CD4-positive, alpha-beta T cell (primary cell): ENCODE measurements at regions of chr20 and their contacts with region 1.

Region 1: GRCh38 chr20:4864311-4864752 is 137.0 kb downstream of the SLC23A2 start:
- DNase-seq: no peak
- ATAC-seq: no peak
- H3K4me3 ChIP-seq: no peak overlapping the region
- H3K4me3 Mint-ChIP-seq: peak overlapping the region; percentile 20
- H3K27ac ChIP-seq: no peak overlapping the region
- H3K27ac Mint-ChIP-seq: no peak overlapping the region
- H3K4me1 ChIP-seq: no peaks in the 10 kb centered on the region
- H3K4me1 Mint-ChIP-seq: peaks cover 7% of the 10 kb centered on the region
- H3K27me3 ChIP-seq: no peaks in the 10 kb centered on the region
- H3K27me3 Mint-ChIP-seq: no peaks in the 10 kb centered on the region
- CTCF ChIP-seq: no peak

Region 2: DNA sequence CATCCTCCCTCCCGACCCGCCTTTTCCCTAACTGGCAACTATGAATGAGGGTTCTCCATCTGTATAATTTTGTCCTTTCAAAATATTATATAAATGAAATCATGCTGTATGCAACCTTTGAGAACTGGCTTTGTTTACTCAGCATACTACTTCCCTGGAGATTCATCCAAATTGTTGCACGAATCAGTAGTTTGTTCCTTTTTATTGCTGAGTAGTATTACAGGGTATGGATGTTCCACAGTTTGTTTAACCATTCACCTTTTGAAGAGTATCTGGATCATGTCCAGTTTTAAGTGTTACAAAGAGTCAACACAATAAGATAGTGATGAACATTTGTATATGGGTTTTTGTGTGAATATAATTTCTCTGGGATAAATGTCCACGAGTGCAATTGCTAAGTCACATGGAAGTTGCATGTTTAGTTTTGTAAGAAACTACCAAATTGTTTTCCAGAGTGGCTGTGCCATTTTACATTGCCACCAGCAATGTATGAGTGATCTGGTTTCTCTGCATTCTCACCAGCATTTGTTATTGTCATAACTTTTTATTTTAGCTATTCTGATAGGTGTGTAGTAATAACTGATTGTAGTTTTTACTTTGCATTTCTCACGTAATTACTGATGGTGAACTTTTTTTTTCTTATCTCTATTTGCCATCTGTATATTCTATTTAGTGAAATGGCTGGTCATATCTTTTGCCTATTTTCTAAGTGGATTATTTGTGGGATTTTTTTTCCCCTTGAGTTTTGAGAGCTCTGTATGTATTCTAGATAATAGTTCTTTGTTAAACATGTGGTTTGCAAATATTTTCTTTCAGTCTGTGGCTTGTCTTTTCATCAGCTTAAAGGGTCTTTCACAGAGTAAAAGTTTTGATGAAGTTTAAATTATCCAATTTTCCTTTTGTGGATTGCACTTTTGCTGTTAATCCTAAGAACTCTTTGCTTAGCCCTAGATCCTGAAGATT is 834.5 kb before region 1 on chr20:
- CTCF ChIA-PET with region 1: no interaction called
- POLR2A ChIA-PET with region 1: no interaction called
- intact Hi-C with region 1: loop called in 1 of 2 experiments (anchors 5 kb)
- DNase-seq: no peak
- ATAC-seq: no peak
- H3K4me3 ChIP-seq: no peak overlapping the region
- H3K4me3 Mint-ChIP-seq: no peak overlapping the region
- H3K27ac ChIP-seq: no peak overlapping the region
- H3K27ac Mint-ChIP-seq: no peak overlapping the region
- H3K4me1 ChIP-seq: no peaks in the 10 kb centered on the region
- H3K4me1 Mint-ChIP-seq: no peaks in the 10 kb centered on the region
- H3K27me3 ChIP-seq: no peaks in the 10 kb centered on the region
- H3K27me3 Mint-ChIP-seq: no peaks in the 10 kb centered on the region
- CTCF ChIP-seq: no peak

Region 3: DNA sequence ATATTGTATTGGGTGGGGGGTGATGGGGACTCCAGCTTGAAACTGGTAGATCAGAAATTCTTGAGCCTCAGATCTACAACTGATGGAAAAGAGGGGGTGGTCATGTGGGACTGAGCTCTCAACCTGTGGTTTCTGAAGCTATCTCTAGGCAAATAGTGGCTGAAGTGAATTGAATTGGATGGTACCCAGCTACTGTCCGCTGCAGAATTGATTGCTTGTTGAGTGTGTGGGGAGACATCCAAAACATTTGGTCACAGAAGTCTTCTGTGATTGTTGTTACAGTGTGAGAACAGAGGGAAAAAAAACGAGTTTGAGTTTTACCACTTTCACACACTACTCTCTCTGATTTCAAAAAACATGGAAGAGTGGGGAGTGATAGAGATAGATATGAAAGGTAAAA is 277.3 kb after region 1 on chr20:
- CTCF ChIA-PET with region 1: no interaction called
- POLR2A ChIA-PET with region 1: no interaction called
- intact Hi-C with region 1: no loop called
- DNase-seq: no peak
- ATAC-seq: no peak
- H3K4me3 ChIP-seq: no peak overlapping the region
- H3K4me3 Mint-ChIP-seq: no peak overlapping the region
- H3K27ac ChIP-seq: no peak overlapping the region
- H3K27ac Mint-ChIP-seq: no peak overlapping the region
- H3K4me1 ChIP-seq: peaks cover 12% of the 10 kb centered on the region
- H3K4me1 Mint-ChIP-seq: peaks cover 64% of the 10 kb centered on the region
- H3K27me3 ChIP-seq: no peaks in the 10 kb centered on the region
- H3K27me3 Mint-ChIP-seq: no peaks in the 10 kb centered on the region
- CTCF ChIP-seq: no peak